AG04450 (cell line): ENCODE measurements at regions of chr11 and their contacts with region 1.

Region 1: DNA sequence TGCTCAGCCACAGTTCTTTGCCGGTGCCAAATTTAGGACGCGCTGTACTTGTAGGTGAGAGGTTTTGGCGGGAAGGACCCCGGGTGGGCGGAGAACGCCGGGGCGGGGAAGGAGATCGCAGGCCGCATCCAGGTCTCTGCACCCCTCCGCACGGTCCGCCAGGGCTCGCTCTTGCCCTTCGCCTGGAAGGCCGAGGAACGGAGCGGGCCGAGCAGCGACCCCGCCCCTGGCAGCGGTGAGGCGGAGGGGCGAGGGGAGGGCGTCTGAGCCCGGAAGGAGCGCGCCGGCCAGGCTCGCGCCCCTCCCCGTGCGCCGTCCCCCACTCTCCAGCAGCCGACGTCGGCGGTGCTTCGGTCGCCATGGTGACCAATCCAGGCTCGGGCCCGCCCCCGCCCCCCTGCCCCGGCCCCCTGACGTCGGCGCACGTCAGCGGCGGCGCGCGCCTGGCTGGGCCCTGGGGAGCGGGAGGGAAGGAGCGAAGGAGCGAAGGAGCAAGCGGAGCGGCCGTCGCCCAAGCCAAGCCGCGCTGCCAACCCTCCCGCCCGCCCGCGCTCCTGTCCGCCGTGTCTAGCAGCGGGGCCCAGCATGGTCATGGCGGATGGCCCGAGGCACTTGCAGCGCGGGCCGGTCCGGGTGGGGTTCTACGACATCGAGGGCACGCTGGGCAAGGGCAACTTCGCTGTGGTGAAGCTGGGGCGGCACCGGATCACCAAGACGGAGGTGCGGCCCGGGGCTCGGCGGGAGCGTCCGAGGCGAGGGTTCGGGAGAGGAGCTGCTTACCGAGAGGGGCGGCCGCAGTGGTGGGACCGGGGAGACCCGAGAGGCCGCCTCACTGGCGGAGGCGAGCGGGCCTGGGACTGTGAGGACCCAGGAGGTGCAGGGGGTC is at the start of gene SIK2:
- DNase-seq: peak; percentile 91
- H3K4me3 ChIP-seq: peak within 1 kb of the TSS; percentile 81
- H3K27ac ChIP-seq: peak within 1 kb of the TSS; percentile 85
- H3K27me3 ChIP-seq: no peaks in the 10 kb centered on the region
- CTCF ChIP-seq: peak; percentile 86
- polyA plus RNA-seq, gene SIK2: 23.3 and 23.4 TPM in 2 replicates

Region 2: DNA sequence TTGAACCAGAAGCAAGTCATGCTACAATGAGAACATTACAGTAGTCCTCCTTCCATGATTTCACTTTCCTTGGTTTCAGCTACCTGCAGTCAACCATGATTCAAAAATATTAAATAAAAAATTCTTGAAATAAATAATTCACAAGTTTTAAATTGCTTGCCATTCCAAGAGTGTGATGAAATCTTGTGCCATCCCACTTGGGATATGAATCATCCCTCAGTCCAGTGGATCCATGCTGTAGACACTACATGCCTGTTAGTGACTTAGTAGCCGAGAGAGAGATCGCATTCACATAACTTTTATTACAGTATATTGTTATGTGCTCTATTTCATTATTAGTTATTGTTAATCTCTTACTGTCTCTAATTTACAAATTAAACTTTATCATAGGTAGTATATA is 81.7 kb before region 1 on chr11:
- CTCF ChIA-PET with region 1: no interaction called
- POLR2A ChIA-PET with region 1: no interaction called
- DNase-seq: no peak
- H3K4me3 ChIP-seq: no peak overlapping the region
- H3K27ac ChIP-seq: no peak overlapping the region
- H3K27me3 ChIP-seq: no peaks in the 10 kb centered on the region
- CTCF ChIP-seq: no peak

Region 3: GRCh38 chr11:111586388-111586831 is 15.8 kb before region 1 on chr11:
- CTCF ChIA-PET with region 1: interaction called, 20 read pairs
- POLR2A ChIA-PET with region 1: interaction called, 4 read pairs
- DNase-seq: no peak
- H3K4me3 ChIP-seq: no peak overlapping the region
- H3K27ac ChIP-seq: no peak overlapping the region
- H3K27me3 ChIP-seq: no peaks in the 10 kb centered on the region
- CTCF ChIP-seq: peak; percentile 65

Region 4: GRCh38 chr11:111623527-111624030 is 21.4 kb after region 1 on chr11:
- CTCF ChIA-PET with region 1: interaction called, 14 read pairs
- POLR2A ChIA-PET with region 1: interaction called, 3 read pairs
- DNase-seq: no peak
- H3K4me3 ChIP-seq: no peak overlapping the region
- H3K27ac ChIP-seq: no peak overlapping the region
- H3K27me3 ChIP-seq: no peaks in the 10 kb centered on the region
- CTCF ChIP-seq: no peak

Region 5: GRCh38 chr11:111654601-111655000 is 52.4 kb after region 1 on chr11:
- CTCF ChIA-PET with region 1: no interaction called
- POLR2A ChIA-PET with region 1: no interaction called
- DNase-seq: no peak
- H3K4me3 ChIP-seq: no peak overlapping the region
- H3K27ac ChIP-seq: no peak overlapping the region
- H3K27me3 ChIP-seq: no peaks in the 10 kb centered on the region
- CTCF ChIP-seq: no peak

Region 6: DNA sequence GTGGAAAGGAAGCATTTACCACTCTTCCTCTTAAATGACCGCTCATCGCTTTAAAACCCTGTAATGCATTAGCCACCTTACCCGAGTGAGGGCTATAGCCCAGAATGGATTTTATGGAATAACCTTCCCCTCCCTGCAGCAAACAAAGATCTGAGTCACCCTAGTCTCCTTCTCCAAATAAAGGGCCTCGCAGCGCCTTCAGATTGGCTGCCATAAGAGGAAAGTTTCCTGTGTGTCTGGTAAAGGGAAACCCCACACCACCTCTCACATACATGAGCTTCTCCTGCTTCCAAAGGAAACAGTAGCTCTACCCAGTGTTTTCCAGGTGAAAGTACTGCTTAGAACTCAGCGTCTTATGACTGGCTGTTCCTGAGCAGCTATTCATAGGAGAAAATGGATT is 116.2 kb after region 1 on chr11:
- CTCF ChIA-PET with region 1: interaction called, 11 read pairs
- POLR2A ChIA-PET with region 1: no interaction called
- DNase-seq: no peak
- H3K4me3 ChIP-seq: no peak overlapping the region
- H3K27ac ChIP-seq: peak overlapping the region; percentile 62
- H3K27me3 ChIP-seq: no peaks in the 10 kb centered on the region
- CTCF ChIP-seq: no peak

Region 7: DNA sequence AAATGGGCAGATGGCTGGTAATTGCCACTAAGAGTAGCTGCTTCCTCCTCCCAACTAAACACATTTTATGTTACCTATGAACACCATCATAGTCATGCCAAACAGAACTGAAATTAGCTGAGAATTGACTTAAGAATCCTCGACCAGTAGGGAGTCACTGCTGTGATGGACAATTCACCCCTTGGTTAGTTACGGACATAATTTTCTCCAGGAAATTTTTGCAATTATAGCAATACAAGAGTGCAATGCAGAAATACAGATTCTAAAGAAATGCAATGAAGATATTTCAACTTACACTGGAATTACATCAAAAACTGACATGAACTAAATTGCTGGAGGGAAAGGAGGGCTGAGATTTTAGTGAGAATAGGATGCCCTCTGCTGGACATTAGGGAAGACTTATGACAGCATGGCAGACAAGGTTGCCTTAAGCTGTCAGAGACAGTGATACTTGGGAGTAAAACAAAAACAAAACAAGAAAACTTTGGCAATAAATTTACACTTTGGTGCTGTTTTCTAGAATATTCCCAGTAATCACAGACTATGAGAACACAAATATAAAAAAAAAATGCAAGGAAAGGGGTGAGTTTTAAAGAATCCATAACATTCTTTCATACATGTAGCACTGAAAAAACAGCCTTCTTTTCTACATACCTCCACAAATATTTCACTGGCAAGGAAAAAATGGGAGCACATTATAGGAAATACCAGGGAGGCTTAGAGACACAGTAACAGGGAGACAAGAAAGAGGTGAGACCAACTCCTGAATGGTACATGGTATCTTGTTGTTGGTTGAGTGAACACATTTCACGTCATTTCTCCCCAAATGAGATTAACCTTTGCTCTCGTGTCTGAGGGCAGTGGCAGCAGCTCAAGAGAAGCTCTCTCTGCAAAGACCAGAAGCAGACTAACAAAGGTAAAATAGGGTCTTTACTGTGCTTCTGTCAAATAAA is 175.1 kb after region 1 on chr11:
- CTCF ChIA-PET with region 1: interaction called, 46 read pairs
- POLR2A ChIA-PET with region 1: no interaction called
- DNase-seq: peak; percentile 63
- H3K4me3 ChIP-seq: no peak overlapping the region
- H3K27ac ChIP-seq: no peak overlapping the region
- H3K27me3 ChIP-seq: no peaks in the 10 kb centered on the region
- CTCF ChIP-seq: peak; percentile 79

Region 8: DNA sequence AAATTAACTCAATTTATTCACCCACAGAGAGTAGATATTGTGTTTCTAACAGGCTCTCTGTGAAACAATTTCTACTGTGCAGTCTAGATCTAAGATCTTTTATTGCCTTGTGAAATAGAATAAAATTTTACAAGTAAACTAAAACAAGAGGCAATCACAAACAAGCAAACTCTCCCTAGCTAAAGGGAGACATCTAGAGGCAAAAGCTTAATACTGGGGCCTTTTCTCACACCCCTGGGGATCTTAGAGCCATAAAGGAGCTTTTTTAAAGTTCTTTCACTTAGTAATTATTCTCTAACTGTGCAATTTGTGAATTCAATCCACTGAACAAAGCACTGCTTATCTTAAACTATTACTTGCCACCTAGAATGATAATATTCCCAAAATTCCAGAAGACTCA is 249.4 kb after region 1 on chr11:
- CTCF ChIA-PET with region 1: interaction called, 16 read pairs
- POLR2A ChIA-PET with region 1: no interaction called
- DNase-seq: no peak
- H3K4me3 ChIP-seq: no peak overlapping the region
- H3K27ac ChIP-seq: no peak overlapping the region
- H3K27me3 ChIP-seq: no peaks in the 10 kb centered on the region
- CTCF ChIP-seq: peak; percentile 66